HEK293 (cell line): ENCODE measurements at regions of chr2 and their contacts with region 1.

Region 1: GRCh38 chr2:201768918-201769317 is 11.8 kb downstream of the ALS2 start:
- H3K4me3 ChIP-seq: no peak overlapping the region
- H3K27ac ChIP-seq: no peak overlapping the region
- H3K4me1 ChIP-seq: peaks cover 6% of the 10 kb centered on the region
- CTCF ChIP-seq: no peak

Region 2: DNA sequence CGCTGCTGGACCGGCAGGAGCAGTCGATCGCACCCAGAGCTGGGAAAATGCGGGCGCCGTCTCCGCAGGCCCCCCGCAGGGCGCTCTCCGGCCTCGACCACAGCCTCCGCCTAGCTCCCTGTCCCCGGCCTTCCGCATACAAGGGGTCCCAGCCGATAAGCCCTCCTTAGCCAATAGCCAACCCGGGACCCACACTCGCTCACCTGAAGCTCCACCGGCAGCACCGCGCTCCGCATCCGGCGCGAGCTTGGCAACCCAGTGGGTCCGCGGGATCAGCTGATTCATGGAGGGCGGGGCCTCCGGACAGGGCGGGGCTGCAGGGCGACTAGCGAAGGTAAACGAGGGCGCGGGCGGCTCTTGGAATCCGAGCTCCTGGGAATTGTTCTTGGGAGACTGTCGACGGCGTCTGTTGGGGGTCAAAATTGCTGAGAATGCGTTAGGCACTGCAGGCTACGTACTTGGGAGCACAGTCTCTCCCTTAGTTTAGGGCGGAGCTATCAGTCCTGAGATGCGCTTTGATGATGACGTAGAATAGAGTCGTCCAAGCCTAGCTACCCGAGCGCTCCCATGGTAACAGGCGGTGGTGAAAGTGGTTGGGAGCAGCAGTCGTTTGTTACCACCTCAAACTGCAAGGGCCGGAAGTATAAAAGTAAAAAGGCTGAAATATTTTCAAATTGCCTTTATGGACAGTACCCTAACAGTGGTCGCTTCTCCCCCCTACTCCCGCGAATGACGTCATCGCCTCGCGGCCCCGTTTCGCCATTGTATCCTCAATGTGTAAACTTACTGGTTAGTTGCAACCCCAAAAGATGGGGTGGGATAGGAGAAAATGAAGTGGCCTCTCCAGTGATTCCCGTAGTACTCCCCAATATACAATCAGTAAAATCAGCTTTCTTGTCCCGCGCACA is 12.0 kb after region 1 on chr2 and contains the start of gene ALS2:
- CTCF ChIA-PET with region 1: interaction called, 4 read pairs
- POLR2A ChIA-PET with region 1: interaction called, 11 read pairs
- H3K4me3 ChIP-seq: peak within 1 kb of the TSS; percentile 98
- H3K27ac ChIP-seq: peak within 1 kb of the TSS; percentile 84
- H3K4me1 ChIP-seq: peaks cover 13% of the 10 kb centered on the region; the same call in 1 of the 2 replicates
- CTCF ChIP-seq: 0 out of 2 replicates have a peak, but pooled peaks have one; percentile 35

Region 3: DNA sequence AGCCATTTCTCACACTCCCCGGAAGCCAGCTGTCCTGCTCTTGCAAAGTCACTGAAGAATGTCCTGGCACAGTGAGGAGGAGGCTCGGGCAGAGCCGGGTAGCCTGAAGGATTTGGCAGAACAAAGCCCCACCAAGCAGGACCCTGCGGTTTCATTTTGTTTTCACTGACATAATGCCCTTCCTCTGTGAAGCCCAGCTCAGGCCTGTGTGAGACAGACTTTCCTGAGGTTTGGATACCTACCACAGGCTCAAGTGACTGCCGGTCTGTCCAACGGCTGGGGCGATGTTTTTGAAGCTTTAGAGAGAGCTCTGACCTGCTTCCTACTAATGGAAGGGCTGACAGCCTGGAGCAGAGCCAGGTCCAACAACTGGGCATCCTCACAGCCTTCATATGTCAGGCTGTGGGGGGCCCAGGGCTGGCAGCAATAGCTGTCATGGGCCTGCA is 164.9 kb after region 1 on chr2:
- CTCF ChIA-PET with region 1: no interaction called
- POLR2A ChIA-PET with region 1: no interaction called
- H3K4me3 ChIP-seq: no peak overlapping the region
- H3K27ac ChIP-seq: no peak overlapping the region
- H3K4me1 ChIP-seq: no peaks in the 10 kb centered on the region
- CTCF ChIP-seq: no peak